SK-N-SH (cell line): ENCODE measurements at regions of chr13 and their contacts with region 1.

Region 1: GRCh38 chr13:75694722-75695121 is 58.6 kb downstream of the LMO7 start:
- DNase-seq: no peak
- H3K4me3 ChIP-seq: no peak overlapping the region
- H3K27ac ChIP-seq: peak overlapping the region in 1 of 2 experiments; percentile 30; a peak in 1 of 4 replicates
- H3K4me1 ChIP-seq: peaks cover 9 to 10% of the 10 kb centered on the region in 2 experiments; a peak in 3 of 4 replicates
- H3K27me3 ChIP-seq: no peaks in the 10 kb centered on the region
- CTCF ChIP-seq: no peak
- EP300 ChIP-seq: no peak
- RAD21 ChIP-seq: no peak

Region 2: DNA sequence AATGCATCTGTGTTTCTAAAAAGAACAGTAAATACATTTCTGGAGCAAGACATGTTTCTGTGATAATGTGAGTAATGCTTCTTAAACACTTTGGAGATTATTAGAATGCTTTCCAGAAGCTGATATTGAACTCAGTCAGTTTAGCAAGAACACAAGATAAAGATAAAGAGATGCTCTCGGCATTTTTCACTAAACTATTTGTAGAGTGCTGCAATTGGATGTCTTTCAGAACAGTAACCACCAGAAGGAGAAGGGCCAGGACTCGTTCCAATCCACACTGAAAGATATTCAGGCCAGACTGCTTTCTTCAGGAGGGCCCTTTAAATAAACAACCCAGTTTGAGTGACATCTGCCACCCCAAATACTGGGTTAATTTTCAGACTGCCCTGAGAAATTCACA is 668.8 kb before region 1 on chr13:
- CTCF ChIA-PET with region 1: no interaction called
- POLR2A ChIA-PET with region 1: no interaction called
- DNase-seq: no peak
- H3K4me3 ChIP-seq: no peak overlapping the region
- H3K27ac ChIP-seq: no peak overlapping the region
- H3K4me1 ChIP-seq: no peaks in the 10 kb centered on the region
- H3K27me3 ChIP-seq: no peaks in the 10 kb centered on the region
- CTCF ChIP-seq: no peak
- EP300 ChIP-seq: no peak
- RAD21 ChIP-seq: no peak

Region 3: DNA sequence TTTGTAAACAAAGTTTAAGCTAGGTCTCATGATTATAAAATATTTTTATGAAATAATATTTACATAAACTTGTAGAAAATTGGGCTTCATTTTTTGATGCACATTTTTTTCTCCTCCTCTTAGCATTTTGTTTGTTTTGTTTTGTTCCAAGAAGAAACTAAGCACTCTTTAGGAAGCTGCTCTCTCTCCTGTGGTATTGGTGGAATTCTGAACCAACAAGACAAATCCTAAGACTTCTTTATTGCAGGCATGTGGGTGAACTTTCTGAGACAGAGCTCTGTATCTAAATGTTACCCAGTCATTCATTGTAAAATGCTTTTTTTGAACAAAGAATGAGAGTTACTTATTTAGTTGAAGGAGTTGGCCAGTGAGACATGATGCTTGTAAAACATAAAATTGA is 19.3 kb before region 1 on chr13:
- CTCF ChIA-PET with region 1: interaction called, 10 read pairs
- POLR2A ChIA-PET with region 1: no interaction called
- DNase-seq: no peak
- H3K4me3 ChIP-seq: no peak overlapping the region
- H3K27ac ChIP-seq: no peak overlapping the region; a peak in 1 of 4 replicates
- H3K4me1 ChIP-seq: peaks cover 3 to 20% of the 10 kb centered on the region in 2 experiments; a peak in 3 of 4 replicates
- H3K27me3 ChIP-seq: no peaks in the 10 kb centered on the region
- CTCF ChIP-seq: no peak
- EP300 ChIP-seq: no peak
- RAD21 ChIP-seq: no peak

Region 4: DNA sequence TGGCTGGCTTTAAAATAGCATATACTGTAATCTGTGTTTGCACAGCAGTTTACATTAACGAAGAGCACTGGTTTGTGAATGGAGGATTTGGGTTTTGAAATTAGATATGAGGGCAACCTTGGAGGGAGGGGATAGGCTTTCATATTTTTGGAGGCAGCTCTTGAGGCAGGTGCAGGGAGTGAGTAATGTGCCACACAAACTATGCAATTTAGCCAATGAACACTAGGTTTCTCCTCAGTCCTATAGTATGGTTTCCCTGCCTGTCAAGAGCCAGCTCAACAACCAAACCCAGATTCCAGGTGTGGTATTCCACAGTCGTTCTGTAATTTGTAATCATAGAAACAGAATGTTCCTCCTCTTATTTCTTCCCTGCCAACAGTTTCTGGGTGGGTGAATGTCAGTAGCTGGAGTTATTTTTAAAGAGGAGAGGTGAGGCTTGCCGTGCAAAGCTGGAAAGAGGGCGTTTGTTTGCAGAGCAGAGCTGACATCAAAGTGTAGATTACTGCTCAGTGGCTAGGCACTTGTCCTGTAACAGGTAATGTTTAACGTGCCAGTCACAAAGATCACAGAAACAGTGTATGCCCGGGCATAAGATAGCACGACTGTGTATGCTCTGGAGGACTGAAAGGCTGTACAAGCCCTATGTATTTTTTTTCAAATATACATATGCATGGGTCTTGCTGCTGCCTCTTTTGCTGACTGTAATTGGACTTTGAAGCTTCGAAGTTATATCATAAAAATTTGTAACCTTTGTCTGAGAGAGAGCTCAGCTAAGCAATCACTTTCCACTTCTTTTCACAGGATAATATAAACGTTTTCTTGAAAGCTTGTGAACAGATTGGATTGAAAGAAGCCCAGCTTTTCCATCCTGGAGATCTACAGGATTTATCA is 65.7 kb after region 1 on chr13:
- CTCF ChIA-PET with region 1: interaction called, 14 read pairs
- POLR2A ChIA-PET with region 1: no interaction called
- DNase-seq: no peak
- H3K4me3 ChIP-seq: no peak overlapping the region
- H3K27ac ChIP-seq: no peak overlapping the region
- H3K4me1 ChIP-seq: peaks cover 6 to 8% of the 10 kb centered on the region in 2 experiments; a peak in 3 of 4 replicates
- H3K27me3 ChIP-seq: no peaks in the 10 kb centered on the region
- CTCF ChIP-seq: no peak
- EP300 ChIP-seq: no peak
- RAD21 ChIP-seq: no peak

Region 5: GRCh38 chr13:75864718-75865117 is 170.0 kb after region 1 on chr13:
- CTCF ChIA-PET with region 1: interaction called, 60 read pairs
- POLR2A ChIA-PET with region 1: no interaction called
- DNase-seq: no peak
- H3K4me3 ChIP-seq: no peak overlapping the region
- H3K27ac ChIP-seq: no peak overlapping the region
- H3K4me1 ChIP-seq: peaks cover 0 to 3% of the 10 kb centered on the region in 2 experiments; a peak in 1 of 4 replicates
- H3K27me3 ChIP-seq: no peaks in the 10 kb centered on the region
- CTCF ChIP-seq: no peak
- EP300 ChIP-seq: no peak
- RAD21 ChIP-seq: no peak

Region 6: DNA sequence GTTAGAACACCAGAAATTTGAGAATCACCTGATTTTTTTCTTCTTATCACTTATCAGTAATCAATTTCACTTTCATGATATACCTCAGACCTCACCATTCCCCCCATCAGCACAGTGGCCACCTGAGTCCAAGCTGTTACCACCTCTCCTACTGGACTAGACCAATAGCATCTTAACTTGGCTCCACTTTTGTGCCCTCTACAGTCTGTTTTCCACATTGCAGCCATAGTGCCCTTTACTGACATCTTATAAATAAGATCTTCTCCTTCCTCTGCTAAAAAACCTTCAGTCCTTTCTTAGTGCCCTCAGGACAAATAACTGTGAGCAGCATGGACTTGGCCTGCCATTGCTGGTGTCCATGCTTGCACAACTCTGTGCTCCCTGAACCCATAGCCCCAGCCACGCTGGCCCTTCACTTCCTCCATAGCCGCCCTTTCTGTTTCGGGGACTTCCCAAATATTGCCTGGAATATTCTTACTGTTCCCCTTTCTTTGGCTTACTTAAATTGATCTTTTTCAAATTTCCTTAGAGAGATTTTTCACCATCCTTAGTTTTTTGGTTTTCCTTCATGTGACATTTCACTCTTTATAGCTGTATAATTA is 322.2 kb after region 1 on chr13:
- CTCF ChIA-PET with region 1: interaction called, 14 read pairs
- POLR2A ChIA-PET with region 1: no interaction called
- DNase-seq: peak; percentile 17
- H3K4me3 ChIP-seq: no peak overlapping the region; a peak in 1 of 4 replicates
- H3K27ac ChIP-seq: no peak overlapping the region
- H3K4me1 ChIP-seq: peaks cover 0 to 2% of the 10 kb centered on the region in 2 experiments; a peak in 2 of 4 replicates
- H3K27me3 ChIP-seq: no peaks in the 10 kb centered on the region; the same call in 1 of the 2 replicates
- CTCF ChIP-seq: peak; percentile 68
- EP300 ChIP-seq: no peak
- RAD21 ChIP-seq: peak; percentile 63